Right ventricle myocardium inferior (tissue), 1 donor: ENCODE measurements at regions of chr17 and their contacts with region 1.

Region 1: DNA sequence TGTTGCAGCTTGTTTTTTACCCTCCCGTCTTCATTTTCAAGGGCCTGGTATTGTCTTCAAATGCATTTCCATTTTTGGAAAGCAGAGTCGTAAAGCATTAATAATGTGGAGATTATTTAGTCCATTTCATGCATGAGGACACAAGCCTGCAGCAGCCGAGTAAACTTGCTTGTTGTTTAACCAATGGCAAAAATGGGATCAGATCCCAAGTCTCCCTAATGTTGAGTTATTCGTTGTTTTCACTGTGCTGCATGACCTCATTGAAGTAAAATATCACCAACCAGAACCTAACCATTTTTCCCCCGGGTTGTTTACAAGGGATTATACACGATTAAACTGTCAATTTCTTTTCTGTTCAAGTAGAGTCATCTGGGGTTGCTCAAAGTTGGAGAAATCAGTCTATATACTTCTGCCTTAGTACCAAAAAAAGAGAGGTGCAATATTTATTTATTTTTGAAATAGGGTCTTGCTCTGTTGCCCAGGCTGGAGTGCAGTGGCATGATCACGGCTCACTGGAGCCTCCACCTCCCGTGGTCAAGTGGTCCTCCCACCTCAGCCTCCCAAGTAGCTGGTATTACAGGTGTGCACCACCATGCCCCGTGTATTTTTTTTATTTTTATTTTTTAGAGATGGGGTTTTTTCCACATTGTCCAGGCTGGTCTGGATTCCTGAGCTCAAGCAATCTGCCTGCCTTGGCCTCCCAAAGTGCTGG is 12.4 kb downstream of the AMZ2 start:
- DNase-seq: no peak
- ATAC-seq: no peak

Region 2: GRCh38 chr17:68035523-68036303 is 224.5 kb before region 1 on chr17 and contains the start of gene KPNA2:
- intact Hi-C with region 1: no loop called
- DNase-seq: peak; percentile 95
- ATAC-seq: peak; percentile 97
- total RNA-seq, gene KPNA2: 20.8 TPM

Region 3: GRCh38 chr17:68291844-68292695 is 31.9 kb after region 1 on chr17:
- intact Hi-C with region 1: no loop called
- DNase-seq: peak; percentile 97
- ATAC-seq: peak; percentile 80

Region 4: DNA sequence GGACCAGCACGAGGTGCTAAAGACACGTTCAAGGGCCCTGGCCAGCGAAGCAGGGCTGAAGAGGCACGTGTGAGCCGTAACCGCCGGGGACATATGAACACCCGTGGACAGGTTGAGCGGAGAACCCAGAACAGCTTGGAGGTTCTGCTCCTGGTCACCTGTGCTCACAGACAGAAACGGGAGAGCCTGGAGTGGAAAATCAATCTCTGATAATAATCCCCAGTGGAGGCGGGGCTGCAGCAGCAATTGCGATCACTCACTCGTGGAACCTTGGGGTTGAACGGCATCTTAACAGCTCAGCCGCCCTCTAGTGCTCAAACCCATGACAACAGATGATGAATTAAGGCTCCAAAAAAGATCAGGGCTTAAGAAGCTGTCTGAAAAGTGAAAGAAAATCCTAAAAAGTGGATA is 171.5 kb after region 1 on chr17:
- intact Hi-C with region 1: loop called (anchors 5 kb)
- DNase-seq: no peak
- ATAC-seq: no peak

Region 5: DNA sequence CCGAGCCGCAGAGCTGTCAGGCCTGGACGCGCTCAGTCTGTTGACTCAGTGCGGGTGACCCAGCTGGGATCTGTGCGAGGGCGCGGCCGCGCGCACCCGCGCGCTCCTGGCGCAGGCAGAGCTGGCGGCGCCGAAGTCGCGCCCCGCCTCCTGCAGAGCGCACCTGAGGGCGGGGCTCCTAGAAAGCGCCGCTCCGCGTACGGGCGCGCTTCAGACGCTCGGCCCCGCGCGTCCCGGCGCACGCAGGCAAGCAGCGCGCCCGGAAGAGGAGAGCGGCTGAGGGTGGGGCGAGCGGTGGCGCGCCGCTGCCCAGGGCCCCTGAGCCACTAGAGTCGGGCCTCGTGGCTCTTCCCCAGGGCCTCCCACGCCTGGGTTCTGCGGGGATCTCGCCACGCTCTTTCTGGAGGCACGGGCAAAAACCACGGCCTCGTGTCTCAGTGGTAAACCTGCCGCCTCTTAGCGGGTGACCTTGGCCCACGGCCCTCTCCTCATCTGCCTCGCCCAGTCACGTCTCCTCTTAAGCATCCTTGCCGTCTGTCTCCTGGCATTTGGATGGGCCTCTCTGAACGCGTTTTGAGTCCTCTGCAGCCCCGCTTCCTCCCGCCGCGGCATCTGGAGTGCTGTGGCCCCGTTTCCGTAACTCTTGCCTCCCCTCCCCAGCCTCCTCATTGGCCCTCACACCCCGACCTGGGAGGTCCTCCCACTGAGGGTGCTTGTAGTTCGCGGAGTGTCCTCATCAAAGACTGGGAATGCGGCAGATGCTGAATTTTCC is 1067.0 kb after region 1 on chr17 and contains the start of gene ABCA5:
- intact Hi-C with region 1: no loop called
- DNase-seq: peak; percentile 92
- ATAC-seq: peak; percentile 98
- total RNA-seq, gene ABCA5: 19.3 TPM